ENCODE measurements at regions of chr12 and their contacts with region 1.

Region 1: DNA sequence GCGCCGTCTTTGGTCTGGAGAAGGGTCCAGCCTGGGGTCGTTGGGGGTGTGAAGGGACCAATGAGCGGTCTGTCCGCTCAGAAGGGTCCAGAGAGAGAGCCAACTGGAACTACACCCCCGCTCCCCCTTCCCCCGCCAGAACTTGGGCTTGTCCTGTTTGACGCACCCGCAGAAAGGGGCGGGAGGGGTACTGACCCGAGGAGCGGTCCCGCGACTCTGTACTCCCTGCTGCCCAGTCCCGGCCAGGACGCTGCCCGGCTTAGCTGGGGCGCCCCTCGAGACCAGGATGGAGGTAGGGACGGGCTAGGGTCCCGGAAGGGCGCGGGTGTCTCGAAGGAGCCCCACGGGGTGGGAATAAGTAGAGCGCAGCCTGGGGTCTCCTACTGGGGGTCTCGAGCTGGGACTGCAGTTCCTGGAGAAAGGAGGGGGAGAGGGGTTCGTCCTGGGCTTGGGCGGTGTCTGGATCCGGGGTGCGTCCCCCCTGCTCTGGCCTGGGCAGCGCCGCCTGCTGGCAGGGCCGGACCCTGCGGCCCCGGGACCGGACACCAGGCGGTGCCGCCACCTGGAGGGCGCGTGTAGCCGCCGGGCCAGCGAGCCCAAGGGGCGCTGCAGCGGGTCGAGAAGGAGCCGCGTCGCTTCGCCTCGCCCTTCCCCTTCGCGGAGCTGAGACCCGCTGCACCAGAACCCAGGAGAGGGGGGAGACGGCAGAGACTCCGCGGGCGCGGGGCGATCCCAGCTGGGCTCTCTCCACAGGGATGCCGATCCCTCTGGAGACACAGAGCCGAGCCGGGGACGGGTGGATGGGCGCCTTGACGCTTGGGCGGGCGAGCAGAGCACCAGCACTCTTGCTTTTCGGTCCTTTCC is 3.8 kb upstream of the CACNB3 start:
- DNase-seq: peak; percentile 83
- H3K4me3 Mint-ChIP-seq: peak overlapping the region; percentile 93
- H3K27ac Mint-ChIP-seq: no peak overlapping the region
- H3K4me1 Mint-ChIP-seq: peaks cover 26% of the 10 kb centered on the region
- H3K27me3 Mint-ChIP-seq: peaks cover 15% of the 10 kb centered on the region

Region 2: GRCh38 chr12:48580831-48581230 is 233.7 kb before region 1 on chr12:
- CTCF ChIA-PET with region 1: no interaction called
- intact Hi-C with region 1: no loop called
- DNase-seq: no peak
- H3K4me3 Mint-ChIP-seq: no peak overlapping the region
- H3K27ac Mint-ChIP-seq: no peak overlapping the region
- H3K4me1 Mint-ChIP-seq: no peaks in the 10 kb centered on the region
- H3K27me3 Mint-ChIP-seq: peaks cover 3% of the 10 kb centered on the region

Region 3: DNA sequence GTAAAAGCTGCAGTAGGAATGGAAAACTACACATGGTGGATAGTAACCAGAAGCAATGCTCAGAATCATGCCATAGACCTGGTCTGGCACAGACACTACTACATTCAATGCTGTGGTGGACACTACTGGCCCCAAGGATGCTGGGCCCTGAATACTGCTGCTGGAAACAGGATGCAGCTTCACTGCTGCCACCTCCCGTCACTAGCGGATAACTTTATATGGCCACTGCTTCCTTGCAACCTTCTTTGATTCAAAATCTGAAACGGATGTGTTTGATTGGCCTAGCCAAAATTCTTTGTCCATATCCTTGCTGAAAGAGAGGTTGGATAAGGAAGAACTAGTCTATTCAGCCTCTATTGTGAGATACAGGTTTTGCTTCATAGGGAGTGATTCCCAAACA is 56.3 kb before region 1 on chr12:
- CTCF ChIA-PET with region 1: interaction called, 21 read pairs
- intact Hi-C with region 1: loop called (anchors 1 kb)
- DNase-seq: no peak
- H3K4me3 Mint-ChIP-seq: no peak overlapping the region
- H3K27ac Mint-ChIP-seq: no peak overlapping the region
- H3K4me1 Mint-ChIP-seq: peaks cover 2% of the 10 kb centered on the region
- H3K27me3 Mint-ChIP-seq: no peaks in the 10 kb centered on the region

Region 4: GRCh38 chr12:48826209-48826894 is 11.9 kb after region 1 on chr12:
- CTCF ChIA-PET with region 1: interaction called, 22 read pairs
- intact Hi-C with region 1: no loop called
- DNase-seq: no peak
- H3K4me3 Mint-ChIP-seq: no peak overlapping the region
- H3K27ac Mint-ChIP-seq: no peak overlapping the region
- H3K4me1 Mint-ChIP-seq: no peaks in the 10 kb centered on the region
- H3K27me3 Mint-ChIP-seq: no peaks in the 10 kb centered on the region

Region 5: GRCh38 chr12:48890657-48891418 is 76.3 kb after region 1 on chr12:
- CTCF ChIA-PET with region 1: interaction called, 26 read pairs
- intact Hi-C with region 1: loop called (anchors 2 kb)
- DNase-seq: peak; percentile 86
- H3K4me3 Mint-ChIP-seq: peak overlapping the region; percentile 24
- H3K27ac Mint-ChIP-seq: no peak overlapping the region
- H3K4me1 Mint-ChIP-seq: peaks cover 5% of the 10 kb centered on the region
- H3K27me3 Mint-ChIP-seq: peaks cover 13% of the 10 kb centered on the region

Region 6: GRCh38 chr12:48977315-48978281 is 163.1 kb after region 1 on chr12:
- CTCF ChIA-PET with region 1: no interaction called
- intact Hi-C with region 1: loop called (anchors 2 kb)
- DNase-seq: peak; percentile 83
- H3K4me3 Mint-ChIP-seq: peak overlapping the region; percentile 19
- H3K27ac Mint-ChIP-seq: no peak overlapping the region
- H3K4me1 Mint-ChIP-seq: peaks cover 44% of the 10 kb centered on the region
- H3K27me3 Mint-ChIP-seq: peaks cover 67% of the 10 kb centered on the region